Right ventricle myocardium inferior (tissue), 1 donor: ENCODE measurements at regions of chr3 and their contacts with region 1.

Region 1: GRCh38 chr3:45055411-45056143 is 29.5 kb downstream of the CLEC3B start:
- DNase-seq: no peak
- ATAC-seq: no peak

Region 2: GRCh38 chr3:45113625-45114050 is 58.1 kb after region 1 on chr3:
- intact Hi-C with region 1: loop called (anchors 2 kb)
- DNase-seq: no peak
- ATAC-seq: peak; percentile 94

Region 3: GRCh38 chr3:45210308-45211041 is 154.9 kb after region 1 on chr3:
- intact Hi-C with region 1: no loop called
- DNase-seq: peak; percentile 92
- ATAC-seq: peak; percentile 91